ENCODE measurements at regions of chr15 and their contacts with region 1.

Region 1: DNA sequence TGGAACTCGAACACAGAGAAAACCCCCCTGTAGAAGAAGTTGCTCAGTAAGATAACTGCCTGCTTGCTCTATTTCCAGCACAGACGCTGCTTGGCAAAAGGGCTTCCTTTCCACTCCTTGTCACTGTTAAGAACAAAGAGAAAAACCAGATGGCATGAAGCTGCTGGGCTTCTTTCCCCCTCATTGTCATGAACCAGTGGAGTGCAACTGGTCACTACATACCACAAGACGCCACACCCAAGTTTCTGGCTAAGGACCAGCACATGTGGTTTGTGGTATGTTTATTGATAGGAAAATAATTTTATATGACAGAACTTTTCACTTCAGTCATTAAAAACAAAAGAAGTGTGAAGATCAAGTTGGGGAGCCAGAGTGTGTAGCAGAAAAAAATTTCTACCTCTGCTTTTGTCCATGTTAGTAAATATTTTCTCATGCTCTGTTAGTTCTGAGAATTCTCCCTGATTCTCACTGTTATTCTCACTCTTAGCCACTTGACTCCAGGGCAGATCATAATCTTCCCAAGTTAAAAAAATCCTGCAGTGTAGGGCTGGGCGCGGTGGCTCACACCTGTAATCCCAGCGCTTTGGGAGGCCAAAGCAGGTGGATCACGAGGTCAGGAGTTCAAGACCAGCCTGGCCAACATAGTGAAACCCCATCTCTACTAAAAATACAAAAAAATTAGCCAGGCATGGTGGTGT is 37.9 kb downstream of the CLK3 start:
- DNase-seq: no peak
- ATAC-seq: no peak
- H3K4me3 ChIP-seq: no peak overlapping the region
- H3K27ac ChIP-seq: peak overlapping the region; percentile 64 to 89 (median 71)
- H3K4me1 ChIP-seq: peaks cover 66 to 78% of the 10 kb centered on the region in 2 donors
- H3K27me3 ChIP-seq: no peaks in the 10 kb centered on the region
- CTCF ChIP-seq: no peak
- POLR2A ChIP-seq: no peak

Region 2: DNA sequence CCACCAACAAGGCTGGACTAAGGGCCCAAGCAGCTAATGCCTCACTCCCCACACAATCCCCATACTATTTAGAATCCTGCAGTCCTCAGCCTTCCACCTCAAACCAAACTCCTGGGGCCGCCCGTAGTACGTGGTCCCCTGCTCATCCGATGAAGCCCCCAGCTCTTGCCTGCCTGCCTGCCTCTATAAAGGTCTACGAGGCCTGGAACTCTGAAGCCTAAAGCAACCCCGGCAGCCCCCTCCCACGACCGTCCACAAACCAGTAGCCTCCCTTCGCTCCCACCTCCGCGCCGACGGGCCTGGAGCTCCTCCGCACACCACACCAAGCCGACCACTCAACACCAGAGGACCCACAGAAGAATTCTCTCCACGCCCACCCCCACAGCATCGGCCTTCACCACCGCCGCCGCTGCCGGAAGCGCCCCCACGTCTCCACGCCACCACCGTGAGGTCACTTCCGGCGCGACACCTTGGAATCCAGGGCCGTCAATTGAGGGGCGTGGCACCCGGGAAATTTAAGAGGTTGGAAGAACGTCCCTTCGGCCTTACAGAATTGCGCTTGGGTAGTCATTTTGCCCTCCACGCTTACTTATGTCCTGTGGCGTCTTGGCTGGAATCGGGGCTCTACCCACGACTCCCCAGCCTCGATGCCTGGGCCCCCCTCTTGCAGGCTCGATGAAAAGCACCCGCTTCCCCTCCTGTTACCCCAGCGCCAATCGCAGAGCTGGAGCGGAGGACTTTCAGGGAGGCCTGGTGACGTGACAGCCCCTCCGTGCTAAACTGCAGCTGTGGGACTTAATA is 42.2 kb after region 1 on chr15 and contains the start of gene EDC3:
- in situ Hi-C with region 1: no loop called
- intact Hi-C with region 1: loop called (anchors 5 kb)
- DNase-seq: peak; percentile 70 to 76
- ATAC-seq: peak; percentile 88 to 94
- H3K4me3 ChIP-seq: peak within 1 kb of the TSS; percentile 87 to 98 (median 92)
- H3K27ac ChIP-seq: peak within 1 kb of the TSS; percentile 83 to 92 (median 87)
- H3K4me1 ChIP-seq: peaks cover 14 to 22% of the 10 kb centered on the region in 2 donors
- H3K27me3 ChIP-seq: no peaks in the 10 kb centered on the region
- CTCF ChIP-seq: no peak
- POLR2A ChIP-seq: peak; percentile 14 to 32
- total RNA-seq, gene EDC3: 7.9 to 19.4 (median 11.6) TPM